ENCODE measurements at regions of chr19 and their contacts with region 1.

Region 1: GRCh38 chr19:14427461-14427860 is 5.6 kb upstream of the PKN1 start:
- DNase-seq: no peak

Region 2: DNA sequence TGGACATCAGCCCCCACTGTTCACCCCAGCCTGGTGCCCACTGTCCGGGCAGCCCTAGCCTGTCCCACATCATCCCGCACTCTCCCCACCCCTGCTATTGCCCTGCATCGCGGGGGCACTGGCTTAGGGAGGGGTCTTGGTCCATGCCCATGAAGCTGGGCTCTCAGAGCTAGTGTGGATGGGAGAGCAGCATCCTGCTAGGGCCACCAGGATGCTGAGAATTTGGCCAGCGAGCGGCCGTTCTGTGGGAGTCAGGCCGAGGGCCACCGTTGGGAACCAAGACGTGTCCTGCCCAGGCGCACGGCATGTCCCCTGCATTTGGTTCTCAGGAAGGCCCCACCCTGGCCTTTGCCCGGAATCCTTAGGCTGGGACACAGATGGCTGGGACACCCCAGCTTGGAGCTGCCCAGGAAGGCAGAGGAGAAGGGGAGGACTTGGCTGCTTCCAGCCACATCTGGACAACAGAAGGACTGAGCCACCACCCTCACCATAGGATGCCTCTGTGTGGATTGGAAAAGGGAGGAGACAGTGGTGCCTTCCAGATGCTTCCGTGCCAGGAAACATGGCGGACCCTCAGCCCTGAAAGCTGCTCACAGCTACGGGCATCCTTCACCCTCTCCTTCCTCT is 31.6 kb before region 1 on chr19:
- intact Hi-C with region 1: loop called in 1 of 2 experiments (anchors 1 kb)
- DNase-seq: no peak

Region 3: GRCh38 chr19:14472202-14472938 is 44.9 kb after region 1 on chr19:
- intact Hi-C with region 1: no loop called
- DNase-seq: peak; percentile 93

Region 4: DNA sequence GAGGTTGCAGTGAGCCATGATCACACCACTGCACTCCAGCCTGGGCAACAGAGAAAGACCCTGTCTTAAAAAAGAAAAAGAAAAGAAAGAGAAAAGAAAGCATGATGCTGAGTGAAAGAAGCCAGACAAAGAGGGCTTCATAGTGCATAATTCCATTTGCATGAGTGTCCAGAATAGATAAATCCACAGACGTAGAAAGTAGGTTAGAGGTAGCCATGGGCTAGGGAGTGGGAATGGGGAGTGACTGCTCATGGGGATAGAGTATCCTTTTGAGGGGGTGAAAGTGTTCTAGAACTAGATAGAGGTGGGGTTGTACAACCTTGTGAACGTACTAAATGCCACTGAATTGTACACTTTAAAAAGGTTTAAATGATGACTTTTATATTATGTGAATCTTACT is 646.9 kb after region 1 on chr19:
- intact Hi-C with region 1: no loop called
- DNase-seq: no peak